ENCODE measurements at regions of chr20 and their contacts with region 1.

Region 1: GRCh38 chr20:63973636-63974402 is 4.1 kb upstream of the ZNF512B start:
- DNase-seq: peak; percentile 89 to 95
- ATAC-seq: peak; percentile 86 to 89 (median 86)
- H3K4me3 ChIP-seq: peak overlapping the region; percentile 59
- H3K27ac ChIP-seq: peak overlapping the region; percentile 46
- H3K4me1 ChIP-seq: peaks cover 7% of the 10 kb centered on the region
- H3K27me3 ChIP-seq: no peaks in the 10 kb centered on the region
- CTCF ChIP-seq: peak; percentile 99

Region 2: GRCh38 chr20:63253438-63254236 is 720.2 kb before region 1 on chr20:
- intact Hi-C with region 1: no loop called
- DNase-seq: no peak
- ATAC-seq: peak in 1 of 4 donors; percentile 21
- H3K4me3 ChIP-seq: peak overlapping the region; percentile 44
- H3K27ac ChIP-seq: no peak overlapping the region
- H3K4me1 ChIP-seq: peaks cover 2% of the 10 kb centered on the region
- H3K27me3 ChIP-seq: peaks cover 0 to 73% (median 34%) of the 10 kb centered on the region in 3 donors
- CTCF ChIP-seq: no peak

Region 3: GRCh38 chr20:63537525-63538203 is 436.2 kb before region 1 on chr20:
- intact Hi-C with region 1: loop called (anchors 2 to 5 kb)
- DNase-seq: peak; percentile 86 to 91
- ATAC-seq: peak; percentile 87 to 95 (median 89)
- H3K4me3 ChIP-seq: peak overlapping the region; percentile 34
- H3K27ac ChIP-seq: no peak overlapping the region
- H3K4me1 ChIP-seq: no peaks in the 10 kb centered on the region
- H3K27me3 ChIP-seq: peaks cover 0 to 40% (median 13%) of the 10 kb centered on the region in 3 donors
- CTCF ChIP-seq: peak; percentile 96

Region 4: GRCh38 chr20:63785691-63786131 is 188.1 kb before region 1 on chr20:
- intact Hi-C with region 1: loop called (anchors 5 kb)
- DNase-seq: no peak
- ATAC-seq: no peak
- H3K4me3 ChIP-seq: no peak overlapping the region
- H3K27ac ChIP-seq: no peak overlapping the region
- H3K4me1 ChIP-seq: no peaks in the 10 kb centered on the region
- H3K27me3 ChIP-seq: no peaks in the 10 kb centered on the region
- CTCF ChIP-seq: no peak

Region 5: DNA sequence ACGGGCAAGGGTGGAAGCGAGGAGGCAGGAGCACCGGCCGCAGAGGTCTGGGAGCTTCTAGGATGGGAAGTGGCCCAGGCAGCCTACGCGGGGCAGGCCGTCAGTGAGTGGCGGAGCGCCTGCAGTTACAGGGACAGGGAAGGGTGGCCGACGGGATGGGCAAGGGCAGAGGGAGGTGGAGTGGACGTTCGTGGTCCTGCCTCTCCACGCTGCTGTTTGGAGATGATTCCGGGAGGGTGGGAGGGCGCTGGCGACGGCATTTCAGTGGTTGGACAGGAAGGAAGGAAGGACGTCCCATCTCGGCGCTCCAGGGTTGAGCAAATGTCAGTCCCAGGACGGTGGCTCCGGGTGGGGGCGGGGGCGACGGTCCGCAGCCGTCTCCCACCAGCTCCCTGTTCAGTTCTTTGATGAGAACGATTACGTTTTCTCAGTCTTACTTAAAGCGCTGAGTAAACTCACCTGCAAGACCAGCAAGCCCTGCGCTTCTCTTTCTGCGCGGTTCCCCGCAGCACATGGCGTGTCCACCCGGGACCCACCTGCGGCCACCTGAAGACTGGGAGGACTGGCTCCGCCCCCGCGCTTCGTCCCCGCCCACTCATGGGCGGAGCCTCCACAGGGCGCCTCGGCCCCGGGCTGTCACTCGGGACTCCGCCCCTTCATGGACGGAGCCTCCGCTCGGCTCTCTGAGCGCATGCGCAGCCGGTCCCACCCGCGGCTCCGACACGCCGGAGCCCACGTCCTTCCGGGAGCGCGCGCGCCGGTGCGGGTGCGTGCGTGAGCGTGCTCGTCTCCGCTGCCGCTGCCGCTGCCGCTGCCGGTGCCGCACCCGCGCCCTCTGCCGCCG is 79.2 kb before region 1 on chr20 and contains the start of gene DNAJC5:
- intact Hi-C with region 1: loop called in 1 of 2 experiments (anchors 5 kb)
- DNase-seq: peak; percentile 96 to 98
- ATAC-seq: peak; percentile 93 to 95 (median 94)
- H3K4me3 ChIP-seq: peak within 1 kb of the TSS; percentile 70
- H3K27ac ChIP-seq: peak within 1 kb of the TSS; percentile 79
- H3K4me1 ChIP-seq: peaks cover 21% of the 10 kb centered on the region
- H3K27me3 ChIP-seq: no peaks in the 10 kb centered on the region
- CTCF ChIP-seq: no peak
- total RNA-seq, gene DNAJC5: 20.4 to 27.3 (median 23.3) TPM

Region 6: DNA sequence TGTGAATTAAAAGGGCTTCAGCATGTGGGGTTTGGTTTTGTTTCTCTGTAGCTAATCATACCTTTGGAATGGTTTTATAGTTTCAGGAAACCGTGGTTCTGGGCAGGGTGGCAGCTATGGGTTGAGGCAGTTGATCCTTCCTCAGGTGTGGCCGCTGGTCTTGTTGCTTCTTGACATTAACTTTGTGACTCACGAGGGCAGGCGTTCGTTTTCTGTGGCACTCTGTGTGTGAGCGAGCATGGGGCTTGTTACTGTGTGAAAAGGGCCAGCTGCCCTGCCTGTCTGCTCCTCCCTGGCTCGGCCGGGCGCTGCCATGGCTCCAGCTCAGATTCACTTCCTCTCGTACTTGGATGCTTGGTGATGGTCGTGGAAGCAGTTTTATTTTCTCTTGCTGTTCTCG is 62.6 kb before region 1 on chr20:
- intact Hi-C with region 1: loop called in 1 of 2 experiments (anchors 1 kb)
- DNase-seq: peak in 1 of 2 donors; percentile 38
- ATAC-seq: peak; percentile 72 to 85 (median 76)
- H3K4me3 ChIP-seq: no peak overlapping the region
- H3K27ac ChIP-seq: peak overlapping the region; percentile 59
- H3K4me1 ChIP-seq: no peaks in the 10 kb centered on the region
- H3K27me3 ChIP-seq: no peaks in the 10 kb centered on the region
- CTCF ChIP-seq: no peak

Measured in psoas muscle (tissue), 8 donors.